H1 (cell line): ENCODE measurements at regions of chr19 and their contacts with region 1.

Region 1: DNA sequence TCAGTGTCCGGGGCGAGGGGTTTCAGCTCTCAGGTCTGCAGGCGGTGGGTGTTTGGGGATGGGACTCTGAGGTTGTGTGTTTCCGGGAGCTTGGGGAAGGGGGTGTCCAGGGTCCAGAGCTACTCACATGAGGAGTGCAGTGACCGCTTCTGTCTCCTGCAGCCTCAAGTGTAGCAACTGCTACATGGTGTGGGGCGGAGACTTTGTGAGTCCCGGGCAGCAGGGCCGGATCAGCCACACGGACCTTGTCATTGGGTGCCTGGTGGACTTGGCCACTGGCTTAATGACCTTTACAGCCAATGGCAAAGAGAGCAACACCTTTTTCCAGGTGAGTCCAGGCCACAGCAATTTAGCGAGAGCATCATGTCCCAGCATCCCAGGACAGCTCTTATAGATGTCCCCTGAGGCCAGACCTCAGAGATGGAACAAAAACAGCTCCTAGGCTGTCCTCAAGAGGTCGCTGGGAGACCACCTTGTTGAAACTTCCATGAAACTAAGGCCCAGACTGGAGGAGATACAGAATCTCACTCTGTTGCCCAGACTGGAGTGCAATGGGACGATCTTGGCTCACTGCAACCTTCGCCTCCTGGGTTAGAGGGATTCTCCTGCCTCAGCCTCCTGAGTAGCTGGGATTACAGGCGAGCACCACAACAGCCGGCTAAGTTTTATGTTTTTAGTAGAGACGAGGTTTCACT is 44.9 kb downstream of the RYR1 start:
- DNase-seq: no peak
- H3K4me3 ChIP-seq: no peak overlapping the region
- H3K27ac ChIP-seq: no peak overlapping the region
- H3K4me1 ChIP-seq: no peaks in the 10 kb centered on the region
- H3K27me3 ChIP-seq: no peaks in the 10 kb centered on the region
- CTCF ChIP-seq: peak; percentile 26 to 45 (median 38)
- EP300 ChIP-seq: no peak
- POLR2A ChIP-seq: no peak
- RAD21 ChIP-seq: peak; percentile 55 to 70

Region 2: GRCh38 chr19:38496603-38497487 is 18.4 kb after region 1 on chr19:
- CTCF ChIA-PET with region 1: interaction called, 35 read pairs
- POLR2A ChIA-PET with region 1: interaction called, 6 read pairs
- DNase-seq: no peak
- H3K4me3 ChIP-seq: no peak overlapping the region
- H3K27ac ChIP-seq: no peak overlapping the region
- H3K4me1 ChIP-seq: peaks cover 0 to 3% (median 1%) of the 10 kb centered on the region in 4 experiments; a peak in 3 of 7 replicates
- H3K27me3 ChIP-seq: no peaks in the 10 kb centered on the region
- CTCF ChIP-seq: no peak
- EP300 ChIP-seq: no peak
- POLR2A ChIP-seq: no peak
- RAD21 ChIP-seq: no peak